ENCODE measurements at regions of chr11 and their contacts with region 1.

Region 1: DNA sequence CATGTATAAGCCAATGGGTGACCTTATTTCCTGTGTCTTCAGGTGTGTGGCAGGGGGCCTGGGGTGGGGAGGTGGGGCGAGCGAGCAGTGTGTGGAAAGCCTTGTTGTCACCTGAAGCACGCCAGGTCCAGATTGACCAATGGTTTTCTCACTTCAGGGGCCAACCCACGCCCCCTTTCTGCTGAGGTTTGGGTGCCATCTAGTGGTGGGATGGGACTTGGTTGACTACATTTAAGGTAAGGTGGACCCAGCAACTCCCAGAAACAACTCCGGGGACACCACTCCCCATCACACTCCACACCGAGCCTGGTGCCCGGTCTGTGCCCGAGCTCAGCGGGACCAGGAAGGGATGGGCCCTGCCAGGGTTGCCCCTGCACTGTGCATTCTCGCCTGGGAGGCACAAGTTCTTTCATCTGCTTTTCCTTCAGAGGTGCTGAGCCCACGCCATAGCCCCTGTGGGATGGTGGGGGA is 40.0 kb downstream of the TPCN2 start:
- DNase-seq: peak in 9 of 10 donors; percentile 37 to 81 (median 73)
- H3K4me3 ChIP-seq: no peak overlapping the region
- H3K27ac ChIP-seq: no peak overlapping the region
- H3K27me3 ChIP-seq: no peaks in the 10 kb centered on the region
- CTCF ChIP-seq: peak; percentile 53 to 83 (median 75)

Region 2: DNA sequence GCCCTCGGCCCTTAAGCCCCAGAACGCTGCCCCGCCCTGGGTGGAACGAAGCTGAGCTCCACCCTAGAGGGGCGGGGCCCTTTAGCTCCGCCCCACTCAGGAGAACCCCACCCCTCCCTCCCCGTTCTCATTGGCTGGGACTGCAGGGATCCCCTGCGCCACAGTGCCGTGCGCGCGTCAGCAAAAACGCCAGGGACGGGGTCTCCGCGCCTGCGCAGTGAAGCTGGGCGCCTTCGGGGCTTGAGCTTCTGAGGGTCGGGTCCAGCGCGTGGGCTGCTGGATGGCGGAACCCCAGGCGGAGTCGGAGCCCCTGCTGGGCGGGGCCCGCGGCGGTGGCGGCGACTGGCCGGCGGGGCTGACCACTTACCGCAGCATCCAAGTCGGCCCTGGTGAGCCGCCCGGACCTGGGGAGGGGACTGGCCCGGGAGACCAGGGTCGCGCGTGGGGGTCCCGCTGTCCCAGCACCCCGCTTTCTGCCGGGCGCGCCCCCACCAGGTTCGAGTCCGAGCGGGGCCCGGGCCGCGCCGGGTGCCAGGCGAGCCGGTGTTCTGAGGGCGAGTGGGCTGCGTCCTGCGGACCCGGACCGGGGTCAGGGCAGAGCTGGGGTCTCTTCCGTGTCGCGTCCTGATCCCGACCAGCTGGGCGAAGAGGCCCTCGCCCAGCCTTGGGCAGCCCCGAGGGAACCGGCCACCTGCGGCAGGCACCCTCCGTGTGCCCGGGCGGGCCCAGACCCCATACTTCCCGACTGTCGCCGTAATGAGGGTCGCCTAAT is 39.8 kb before region 1 on chr11 and contains the start of gene TPCN2:
- intact Hi-C with region 1: loop called in 1 of 2 experiments (anchors 5 kb)
- DNase-seq: peak; percentile 86 to 94 (median 92)
- H3K4me3 ChIP-seq: peak within 1 kb of the TSS; percentile 66 to 100 (median 95)
- H3K27ac ChIP-seq: peak within 1 kb of the TSS in 57 of 59 donors; percentile 23 to 96 (median 83)
- H3K27me3 ChIP-seq: no peaks in the 10 kb centered on the region
- CTCF ChIP-seq: peak in 16 of 56 donors; percentile 6 to 44 (median 22)
- total RNA-seq, gene TPCN2: 15.3 to 43.5 (median 27.6) TPM

Region 3: DNA sequence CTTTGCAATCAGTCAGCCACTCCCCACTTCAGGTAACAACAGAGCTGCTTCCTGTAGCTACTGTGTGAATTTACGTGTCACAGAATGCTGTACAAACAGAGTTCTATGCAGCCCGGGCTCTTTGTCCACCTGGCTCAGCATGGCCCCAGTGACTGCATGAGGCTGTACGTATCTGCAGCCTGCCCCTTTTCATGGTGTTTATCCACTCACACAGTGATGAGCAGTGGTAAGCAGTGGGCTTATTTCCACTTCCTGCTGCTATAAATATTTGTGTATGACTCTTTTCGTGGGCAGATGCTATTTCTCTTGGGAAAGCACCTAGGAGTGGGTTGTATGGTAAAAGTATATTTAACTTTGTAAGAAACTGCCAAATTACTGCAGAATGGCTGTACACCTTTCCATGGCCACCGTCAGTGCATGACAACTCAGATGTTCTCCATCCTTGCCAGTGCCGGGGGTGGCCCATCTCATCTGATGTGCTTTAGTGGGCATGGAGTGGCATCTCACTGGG is 248.6 kb after region 1 on chr11:
- intact Hi-C with region 1: no loop called
- DNase-seq: no peak
- H3K4me3 ChIP-seq: no peak overlapping the region
- H3K27ac ChIP-seq: no peak overlapping the region
- H3K27me3 ChIP-seq: no peaks in the 10 kb centered on the region
- CTCF ChIP-seq: no peak

Measured in dorsolateral prefrontal cortex (tissue), 120 donors.